ENCODE measurements at regions of chr13 and their contacts with region 1.

Region 1: GRCh38 chr13:96020155-96020575 is 33.0 kb downstream of the UGGT2 start:
- DNase-seq: peak; percentile 64 to 83 (median 77)
- H3K4me3 ChIP-seq: no peak overlapping the region
- H3K27ac ChIP-seq: no peak overlapping the region
- H3K4me1 ChIP-seq: no peaks in the 10 kb centered on the region
- H3K27me3 ChIP-seq: no peaks in the 10 kb centered on the region

Region 2: DNA sequence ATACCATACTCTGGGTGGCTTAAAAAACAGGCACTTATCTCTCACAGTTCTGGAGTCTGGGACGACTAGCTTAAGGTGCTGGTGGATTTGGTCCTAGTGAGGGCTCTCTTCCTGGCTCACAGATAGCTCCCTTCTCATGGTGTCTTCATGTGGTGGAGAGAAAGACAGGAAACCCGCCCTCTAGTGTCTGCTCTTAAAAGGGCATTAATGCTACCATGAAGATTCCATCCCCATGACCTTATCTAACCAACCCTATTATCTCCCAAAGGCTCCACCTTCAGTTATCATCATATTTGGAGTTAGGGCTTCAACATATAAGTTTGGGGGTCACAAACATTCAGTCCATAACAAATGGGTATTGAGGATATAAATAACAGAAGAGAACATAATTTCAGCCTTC is 209.2 kb after region 1 on chr13:
- CTCF ChIA-PET with region 1: interaction called, 26 read pairs
- POLR2A ChIA-PET with region 1: no interaction called
- DNase-seq: peak; percentile 11 to 45 (median 37)
- H3K4me3 ChIP-seq: no peak overlapping the region
- H3K27ac ChIP-seq: no peak overlapping the region
- H3K4me1 ChIP-seq: no peaks in the 10 kb centered on the region
- H3K27me3 ChIP-seq: peaks cover 0 to 2% (median 0%) of the 10 kb centered on the region in 5 experiments

Region 3: GRCh38 chr13:96817336-96817941 is 797.3 kb after region 1 on chr13:
- CTCF ChIA-PET with region 1: interaction called, 22 read pairs
- POLR2A ChIA-PET with region 1: no interaction called
- DNase-seq: peak; percentile 6 to 26 (median 20)
- H3K4me3 ChIP-seq: no peak overlapping the region
- H3K27ac ChIP-seq: no peak overlapping the region
- H3K4me1 ChIP-seq: peaks cover 0 to 3% (median 0%) of the 10 kb centered on the region in 4 experiments
- H3K27me3 ChIP-seq: peaks cover 0 to 2% (median 0%) of the 10 kb centered on the region in 5 experiments

Region 4: GRCh38 chr13:96958286-96958891 is 938.2 kb after region 1 on chr13:
- CTCF ChIA-PET with region 1: interaction called, 19 read pairs
- POLR2A ChIA-PET with region 1: no interaction called
- DNase-seq: peak; percentile 13 to 53 (median 38)
- H3K4me3 ChIP-seq: no peak overlapping the region
- H3K27ac ChIP-seq: no peak overlapping the region
- H3K4me1 ChIP-seq: no peaks in the 10 kb centered on the region
- H3K27me3 ChIP-seq: no peaks in the 10 kb centered on the region